Activated CD8-positive, alpha-beta T cell treated with anti-CD3 and anti-CD28 coated beads, Interleukin-2, amount 10 ng/mL, durations not matched to agents 7 days and 5 days (primary cell): ENCODE measurements at regions of chr1 and their contacts with region 1.

Region 1: GRCh38 chr1:157156058-157156541 is 17.9 kb upstream of the ETV3 start:
- DNase-seq: peak; percentile 84
- ATAC-seq: peak; percentile 87
- H3K4me3 Mint-ChIP-seq: peak overlapping the region; percentile 12
- H3K27ac Mint-ChIP-seq: peak overlapping the region; percentile 67
- H3K4me1 Mint-ChIP-seq: peaks cover 27% of the 10 kb centered on the region
- H3K27me3 Mint-ChIP-seq: peaks cover 21% of the 10 kb centered on the region

Region 2: DNA sequence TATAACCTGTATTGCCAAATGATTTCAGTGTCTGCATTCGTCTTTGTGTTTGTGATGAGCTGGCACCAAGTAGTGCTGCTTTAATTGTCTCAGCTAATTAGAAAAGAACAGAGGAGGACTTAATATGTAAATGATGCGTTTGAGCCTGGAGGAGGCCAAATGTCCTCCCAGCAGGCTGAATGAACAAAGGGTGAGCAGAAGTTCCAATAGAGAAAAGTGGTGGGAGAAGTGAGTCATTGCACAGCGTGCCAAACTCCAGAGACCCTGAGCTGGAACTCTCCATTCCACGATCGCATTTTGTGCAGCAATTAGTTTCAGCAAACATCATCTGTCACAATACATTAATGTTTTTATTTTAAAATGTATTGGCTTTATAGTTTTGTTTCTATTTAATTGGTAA is 74.4 kb before region 1 on chr1:
- CTCF ChIA-PET with region 1: interaction called, 470 read pairs
- POLR2A ChIA-PET with region 1: no interaction called
- DNase-seq: peak; percentile 2
- ATAC-seq: no peak
- H3K4me3 Mint-ChIP-seq: no peak overlapping the region
- H3K27ac Mint-ChIP-seq: no peak overlapping the region
- H3K4me1 Mint-ChIP-seq: no peaks in the 10 kb centered on the region
- H3K27me3 Mint-ChIP-seq: peaks cover 23% of the 10 kb centered on the region

Region 3: GRCh38 chr1:157099630-157100009 is 56.5 kb before region 1 on chr1 and contains the start of gene ETV3L:
- CTCF ChIA-PET with region 1: interaction called, 16 read pairs
- POLR2A ChIA-PET with region 1: no interaction called
- DNase-seq: no peak
- ATAC-seq: no peak
- H3K4me3 Mint-ChIP-seq: no peak within 1 kb of the TSS
- H3K27ac Mint-ChIP-seq: no peak within 1 kb of the TSS
- H3K4me1 Mint-ChIP-seq: peaks cover 3% of the 10 kb centered on the region
- H3K27me3 Mint-ChIP-seq: peaks cover 16% of the 10 kb centered on the region
- total RNA-seq, gene ETV3L: not detected

Region 4: GRCh38 chr1:157138220-157139051 is 17.7 kb before region 1 on chr1 and contains the start of gene ETV3:
- CTCF ChIA-PET with region 1: interaction called, 61 read pairs
- POLR2A ChIA-PET with region 1: interaction called, 10 read pairs
- DNase-seq: peak; percentile 94
- ATAC-seq: peak; percentile 85
- H3K4me3 Mint-ChIP-seq: peak within 1 kb of the TSS; percentile 95
- H3K27ac Mint-ChIP-seq: peak within 1 kb of the TSS; percentile 92
- H3K4me1 Mint-ChIP-seq: peaks cover 53% of the 10 kb centered on the region
- H3K27me3 Mint-ChIP-seq: no peaks in the 10 kb centered on the region
- total RNA-seq, gene ETV3: 38.2 to 40.2 TPM